Calu3 (cell line): ENCODE measurements at regions of chr15 and their contacts with region 1.

Region 1: GRCh38 chr15:77633134-77633912 is 611 bp upstream of the LINGO1 start:
- DNase-seq: peak; percentile 98
- H3K4me3 Mint-ChIP-seq: peak overlapping the region; percentile 58
- H3K27ac Mint-ChIP-seq: no peak overlapping the region
- H3K4me1 Mint-ChIP-seq: no peaks in the 10 kb centered on the region
- H3K27me3 Mint-ChIP-seq: peaks cover 85% of the 10 kb centered on the region
- CTCF ChIP-seq: peak; percentile 99

Region 2: GRCh38 chr15:77107531-77108355 is 525.6 kb before region 1 on chr15:
- CTCF ChIA-PET with region 1: no interaction called
- intact Hi-C with region 1: loop called (anchors 10 kb)
- DNase-seq: peak; percentile 75
- H3K4me3 Mint-ChIP-seq: no peak overlapping the region
- H3K27ac Mint-ChIP-seq: no peak overlapping the region
- H3K4me1 Mint-ChIP-seq: peaks cover 10% of the 10 kb centered on the region
- H3K27me3 Mint-ChIP-seq: no peaks in the 10 kb centered on the region
- CTCF ChIP-seq: peak; percentile 69

Region 3: GRCh38 chr15:77525400-77525811 is 107.9 kb before region 1 on chr15:
- CTCF ChIA-PET with region 1: no interaction called
- intact Hi-C with region 1: no loop called
- DNase-seq: no peak
- H3K4me3 Mint-ChIP-seq: no peak overlapping the region
- H3K27ac Mint-ChIP-seq: no peak overlapping the region
- H3K4me1 Mint-ChIP-seq: no peaks in the 10 kb centered on the region
- H3K27me3 Mint-ChIP-seq: peaks cover 4% of the 10 kb centered on the region
- CTCF ChIP-seq: no peak

Region 4: DNA sequence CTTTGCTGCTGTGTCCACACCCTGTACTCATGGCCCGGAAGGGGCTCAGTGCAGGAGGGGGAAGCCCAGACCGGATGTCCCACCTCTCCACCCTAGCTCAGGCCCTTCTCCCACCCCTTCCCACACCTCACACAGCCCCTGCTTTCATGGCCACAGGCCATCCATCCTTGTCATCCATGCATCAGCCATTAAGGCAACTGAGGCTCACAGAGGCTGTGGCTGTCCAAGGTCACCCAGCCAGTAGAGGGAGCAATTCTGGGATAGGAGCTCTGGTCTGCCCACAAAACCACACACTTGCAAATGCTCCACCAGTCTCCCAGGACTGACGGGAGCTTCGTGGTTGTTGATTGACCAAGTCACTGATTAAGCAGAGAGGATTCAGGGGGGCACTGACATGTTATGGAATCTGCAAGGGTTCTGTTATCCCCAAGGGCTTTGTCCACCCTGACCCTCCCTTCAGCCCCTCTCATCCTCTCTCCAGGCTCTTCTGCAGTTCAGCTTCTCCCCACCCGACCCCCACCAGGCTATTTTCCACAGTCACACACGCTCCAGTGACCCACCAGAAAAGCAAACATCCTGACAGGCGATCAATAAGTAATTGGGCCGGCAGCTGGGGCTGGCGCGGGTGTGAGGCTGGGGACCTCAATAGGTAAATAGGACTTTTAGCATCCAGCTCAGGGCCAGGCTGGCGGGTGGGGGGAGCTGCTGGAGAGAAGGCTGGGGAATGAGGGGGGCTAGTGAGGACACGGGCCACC is 15.7 kb before region 1 on chr15:
- CTCF ChIA-PET with region 1: interaction called, 16 read pairs
- intact Hi-C with region 1: no loop called
- DNase-seq: peak; percentile 76
- H3K4me3 Mint-ChIP-seq: no peak overlapping the region
- H3K27ac Mint-ChIP-seq: no peak overlapping the region
- H3K4me1 Mint-ChIP-seq: peaks cover 6% of the 10 kb centered on the region
- H3K27me3 Mint-ChIP-seq: peaks cover 66% of the 10 kb centered on the region
- CTCF ChIP-seq: peak; percentile 59

Region 5: GRCh38 chr15:77659350-77660321 is 26.3 kb after region 1 on chr15:
- CTCF ChIA-PET with region 1: interaction called, 11 read pairs
- intact Hi-C with region 1: no loop called
- DNase-seq: peak; percentile 84
- H3K4me3 Mint-ChIP-seq: no peak overlapping the region
- H3K27ac Mint-ChIP-seq: no peak overlapping the region
- H3K4me1 Mint-ChIP-seq: no peaks in the 10 kb centered on the region
- H3K27me3 Mint-ChIP-seq: peaks cover 75% of the 10 kb centered on the region
- CTCF ChIP-seq: peak; percentile 68

Region 6: DNA sequence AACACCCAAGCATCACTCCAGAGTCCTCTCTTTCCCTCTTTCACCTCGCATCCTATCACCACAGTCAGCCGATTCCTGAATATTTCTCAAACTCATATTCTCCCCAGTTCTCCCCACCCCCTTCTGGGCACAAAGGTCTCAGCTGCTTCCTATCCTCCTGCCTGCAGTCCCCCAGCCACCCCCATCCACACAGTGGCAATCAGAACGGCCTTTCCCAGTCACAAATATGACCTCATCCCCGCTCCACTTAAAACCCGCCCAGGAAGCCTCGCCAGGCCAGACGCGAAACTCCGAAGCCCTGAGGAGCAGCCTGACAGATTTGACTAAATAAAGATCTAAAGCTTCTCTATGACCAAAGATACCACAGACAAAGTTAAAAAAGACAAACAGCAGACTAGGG is 49.2 kb after region 1 on chr15:
- CTCF ChIA-PET with region 1: no interaction called
- intact Hi-C with region 1: no loop called
- DNase-seq: no peak
- H3K4me3 Mint-ChIP-seq: no peak overlapping the region
- H3K27ac Mint-ChIP-seq: no peak overlapping the region
- H3K4me1 Mint-ChIP-seq: no peaks in the 10 kb centered on the region
- H3K27me3 Mint-ChIP-seq: peaks cover 84% of the 10 kb centered on the region
- CTCF ChIP-seq: no peak

Region 7: GRCh38 chr15:77821188-77821958 is 188.1 kb after region 1 on chr15:
- CTCF ChIA-PET with region 1: interaction called, 29 read pairs
- intact Hi-C with region 1: loop called (anchors 1 kb)
- DNase-seq: peak; percentile 82
- H3K4me3 Mint-ChIP-seq: no peak overlapping the region
- H3K27ac Mint-ChIP-seq: no peak overlapping the region
- H3K4me1 Mint-ChIP-seq: no peaks in the 10 kb centered on the region
- H3K27me3 Mint-ChIP-seq: peaks cover 83% of the 10 kb centered on the region
- CTCF ChIP-seq: peak; percentile 71